ENCODE measurements at regions of chr6 and their contacts with region 1.

Region 1: DNA sequence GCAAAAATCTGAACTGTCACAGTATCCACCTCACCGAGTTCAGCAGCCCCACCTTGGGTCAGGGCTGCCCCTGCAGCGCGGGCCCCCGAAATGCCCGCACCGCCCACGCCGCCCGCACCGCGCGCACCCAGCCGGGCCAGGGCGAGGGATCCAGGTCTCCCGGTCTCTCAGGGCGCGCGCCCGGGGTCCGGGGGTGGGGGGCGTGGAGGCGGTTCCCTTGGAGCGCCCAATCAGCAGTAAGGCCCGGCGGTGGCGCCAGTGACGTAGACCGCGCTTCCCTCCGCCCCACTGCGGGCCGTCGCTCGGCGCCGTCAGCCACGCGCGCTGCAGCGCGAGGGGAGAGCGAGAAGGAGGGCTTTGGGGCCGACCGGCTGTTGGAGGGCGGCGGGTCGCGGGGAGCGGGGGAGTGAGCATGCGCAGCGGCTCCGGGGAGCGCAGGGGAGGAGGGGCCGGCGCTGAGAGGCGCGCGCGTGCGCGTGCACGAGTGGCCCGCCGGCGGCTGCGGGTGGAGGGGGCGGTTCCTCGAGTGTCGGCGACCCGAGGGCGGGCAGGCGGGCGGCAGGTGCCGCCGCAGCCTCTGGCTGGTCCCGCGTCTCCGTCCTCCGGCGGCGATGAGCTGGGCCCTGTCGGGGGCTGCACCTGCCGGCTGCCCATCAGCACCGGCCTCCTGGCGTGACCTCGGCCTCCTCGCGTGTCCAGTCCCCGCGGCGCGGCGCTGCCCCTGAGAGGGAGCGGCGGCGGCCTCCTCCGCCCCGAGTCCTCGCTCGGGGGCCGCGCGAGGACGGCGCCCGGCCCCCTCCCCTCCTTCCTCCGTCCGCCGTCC is at the start of gene TMEM170B:
- DNase-seq: peak; percentile 85
- H3K4me3 Mint-ChIP-seq: peak within 1 kb of the TSS; percentile 80
- H3K27ac Mint-ChIP-seq: peak within 1 kb of the TSS; percentile 60
- H3K4me1 Mint-ChIP-seq: peaks cover 5% of the 10 kb centered on the region
- H3K27me3 Mint-ChIP-seq: peaks cover 62% of the 10 kb centered on the region
- total RNA-seq, gene TMEM170B: 0.62 and 0.78 TPM in 2 replicates

Region 2: GRCh38 chr6:11093589-11094410 is 443.6 kb before region 1 on chr6 and contains the start of gene SMIM13:
- intact Hi-C with region 1: loop called (anchors 1 kb)
- DNase-seq: peak; percentile 92
- H3K4me3 Mint-ChIP-seq: peak within 1 kb of the TSS; percentile 96
- H3K27ac Mint-ChIP-seq: peak within 1 kb of the TSS; percentile 98
- H3K4me1 Mint-ChIP-seq: peaks cover 22% of the 10 kb centered on the region
- H3K27me3 Mint-ChIP-seq: peaks cover 2% of the 10 kb centered on the region
- total RNA-seq, gene SMIM13: 12.2 and 12.3 TPM in 2 replicates

Region 3: DNA sequence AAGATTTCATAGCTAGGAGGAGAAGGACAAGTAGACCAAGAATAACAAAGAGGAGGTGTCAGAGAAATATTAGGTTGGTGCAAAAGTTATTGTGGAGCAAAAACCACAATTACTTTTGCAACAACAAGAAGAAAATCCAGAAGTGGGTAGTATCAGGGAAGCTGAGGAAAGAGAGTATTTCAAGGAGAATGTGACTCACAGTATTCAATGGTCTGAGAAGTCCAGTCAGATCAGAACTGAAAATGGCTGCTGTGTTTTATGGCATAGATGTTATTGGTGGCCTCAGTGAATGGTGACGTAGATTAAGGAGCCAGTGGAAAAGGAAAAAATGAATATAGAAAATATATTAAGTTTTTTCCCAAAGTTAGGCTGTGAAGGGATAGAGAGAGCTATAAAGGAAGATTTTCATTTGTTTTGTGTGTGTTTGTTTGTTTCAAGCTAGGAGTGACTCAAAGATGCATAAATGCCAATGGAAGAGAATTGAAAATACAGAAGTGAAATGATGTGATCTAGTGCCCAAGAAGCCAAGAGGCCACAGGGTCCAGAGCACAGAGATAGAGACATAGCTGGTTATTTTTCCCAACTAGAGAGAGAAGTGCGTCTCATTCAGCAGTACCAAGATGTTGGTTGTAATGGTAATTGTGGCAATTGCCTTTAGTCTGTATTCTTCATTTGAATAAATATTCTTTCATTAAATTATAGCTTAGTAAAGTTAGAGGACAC is 128.3 kb after region 1 on chr6:
- intact Hi-C with region 1: no loop called
- DNase-seq: no peak
- H3K4me3 Mint-ChIP-seq: no peak overlapping the region
- H3K27ac Mint-ChIP-seq: no peak overlapping the region
- H3K4me1 Mint-ChIP-seq: peaks cover 9% of the 10 kb centered on the region
- H3K27me3 Mint-ChIP-seq: peaks cover 8% of the 10 kb centered on the region

Measured in activated T-helper 2 cell treated with anti-CD3 and anti-CD28 coated beads, Interferon-gamma antibody, Interleukin-2, Interleukin-4, amounts not matched to agents 10 μg/mL and 5 μg/mL and 100 μg/mL, durations not matched to agents 14 hours and 24 hours and 36 hours (primary cell).